ENCODE measurements at regions of chr3 and their contacts with region 1.

Region 1: GRCh38 chr3:196073188-196073838 is 8.6 kb downstream of the TFRC start:
- DNase-seq: no peak
- H3K4me3 ChIP-seq: no peak overlapping the region
- CTCF ChIP-seq: peak; percentile 84

Region 2: GRCh38 chr3:196179380-196180308 is 106.3 kb after region 1 on chr3:
- CTCF ChIA-PET with region 1: interaction called, 17 read pairs
- POLR2A ChIA-PET with region 1: no interaction called
- DNase-seq: no peak
- H3K4me3 ChIP-seq: no peak overlapping the region
- CTCF ChIP-seq: no peak

Region 3: GRCh38 chr3:196192036-196192523 is 118.8 kb after region 1 on chr3:
- CTCF ChIA-PET with region 1: interaction called, 298 read pairs
- POLR2A ChIA-PET with region 1: no interaction called
- DNase-seq: no peak
- H3K4me3 ChIP-seq: no peak overlapping the region
- CTCF ChIP-seq: no peak

Region 4: GRCh38 chr3:196518966-196519717 is 445.8 kb after region 1 on chr3:
- CTCF ChIA-PET with region 1: interaction called, 52 read pairs
- POLR2A ChIA-PET with region 1: no interaction called
- DNase-seq: no peak
- H3K4me3 ChIP-seq: no peak overlapping the region
- CTCF ChIP-seq: peak; percentile 31